ENCODE measurements at regions of chr4 and their contacts with region 1.

Region 1: DNA sequence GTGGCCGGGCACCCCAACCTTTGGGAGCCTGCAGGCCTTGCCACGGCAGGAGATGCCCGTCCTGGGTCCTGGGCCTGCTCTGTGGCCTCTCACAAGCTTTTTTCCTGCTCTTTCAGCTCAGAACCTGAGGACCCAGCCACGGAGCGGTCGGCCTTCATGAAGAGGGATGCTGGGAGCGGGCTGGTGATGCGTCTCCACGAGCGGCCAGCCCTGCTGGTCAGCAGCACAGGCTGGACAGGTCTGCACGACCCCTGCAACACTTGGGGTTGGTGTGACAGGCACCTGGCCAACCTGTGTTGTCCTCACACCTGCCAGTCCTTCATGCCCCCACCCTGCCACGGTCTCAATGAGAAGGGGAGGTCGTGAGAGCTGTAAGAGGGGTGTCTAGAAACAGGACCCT is 170.0 kb downstream of the ADRA2C start:
- DNase-seq: no peak
- H3K4me3 ChIP-seq: no peak overlapping the region
- H3K27ac ChIP-seq: no peak overlapping the region
- H3K4me1 ChIP-seq: no peaks in the 10 kb centered on the region
- H3K27me3 ChIP-seq: no peaks in the 10 kb centered on the region
- CTCF ChIP-seq: no peak
- POLR2A ChIP-seq: no peak

Region 2: GRCh38 chr4:2781921-2782320 is 1154.3 kb before region 1 on chr4:
- CTCF ChIA-PET with region 1: no interaction called
- POLR2A ChIA-PET with region 1: no interaction called
- dilution Hi-C with region 1: no loop called
- intact Hi-C with region 1: no loop called
- DNase-seq: no peak
- H3K4me3 ChIP-seq: no peak overlapping the region
- H3K27ac ChIP-seq: no peak overlapping the region
- H3K4me1 ChIP-seq: no peaks in the 10 kb centered on the region
- H3K27me3 ChIP-seq: peaks cover 10 to 14% of the 10 kb centered on the region in 2 experiments
- CTCF ChIP-seq: no peak
- POLR2A ChIP-seq: no peak

Region 3: GRCh38 chr4:3747581-3747904 is 188.6 kb before region 1 on chr4:
- CTCF ChIA-PET with region 1: interaction called, 12 read pairs
- POLR2A ChIA-PET with region 1: no interaction called
- dilution Hi-C with region 1: no loop called
- intact Hi-C with region 1: no loop called
- DNase-seq: no peak
- H3K4me3 ChIP-seq: no peak overlapping the region
- H3K27ac ChIP-seq: no peak overlapping the region
- H3K4me1 ChIP-seq: no peaks in the 10 kb centered on the region
- H3K27me3 ChIP-seq: peaks cover 5 to 12% of the 10 kb centered on the region in 2 experiments
- CTCF ChIP-seq: peak; percentile 23 to 55
- POLR2A ChIP-seq: no peak

Region 4: DNA sequence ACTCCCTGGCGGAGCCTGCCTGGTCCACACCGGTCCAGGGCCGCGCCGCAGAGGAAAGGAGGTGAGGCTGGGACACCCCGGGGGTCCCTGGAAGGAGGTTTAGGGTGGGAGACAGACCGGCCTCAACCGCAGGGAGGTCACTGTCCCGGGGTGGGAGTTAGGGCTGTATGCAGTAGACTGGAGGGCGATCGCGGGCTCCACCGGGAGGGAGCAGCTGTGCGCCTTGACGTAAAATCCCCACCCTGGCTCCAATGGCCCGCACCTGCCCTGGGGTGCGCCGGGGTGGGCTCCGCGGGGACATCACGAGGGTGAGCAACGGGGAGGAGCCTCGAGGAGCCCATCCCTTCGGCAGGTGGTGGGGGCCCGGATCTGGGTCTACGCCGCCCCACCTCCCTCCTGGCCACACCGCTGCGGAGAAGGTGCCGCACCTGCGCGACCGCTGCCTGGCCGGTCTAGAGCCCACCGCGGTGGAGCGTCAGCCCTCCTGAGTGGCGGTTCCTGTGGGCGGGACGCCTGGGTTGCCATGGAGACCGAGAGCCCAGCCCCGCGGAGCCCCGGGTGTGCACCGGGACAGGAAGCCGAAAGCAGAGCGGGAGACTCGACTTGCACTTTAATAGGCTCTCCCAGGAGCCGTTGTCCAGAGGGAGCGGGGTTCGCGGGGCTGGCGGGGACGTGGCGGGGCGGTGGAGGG is 64.9 kb before region 1 on chr4:
- CTCF ChIA-PET with region 1: no interaction called
- POLR2A ChIA-PET with region 1: no interaction called
- dilution Hi-C with region 1: no loop called
- intact Hi-C with region 1: no loop called
- DNase-seq: no peak
- H3K4me3 ChIP-seq: no peak overlapping the region
- H3K27ac ChIP-seq: no peak overlapping the region
- H3K4me1 ChIP-seq: no peaks in the 10 kb centered on the region
- H3K27me3 ChIP-seq: peaks cover 10 to 12% of the 10 kb centered on the region in 2 experiments
- CTCF ChIP-seq: no peak
- POLR2A ChIP-seq: no peak

Region 5: GRCh38 chr4:4430492-4431197 is 494.5 kb after region 1 on chr4:
- CTCF ChIA-PET with region 1: no interaction called
- POLR2A ChIA-PET with region 1: no interaction called
- dilution Hi-C with region 1: no loop called
- intact Hi-C with region 1: no loop called
- DNase-seq: peak; percentile 50
- H3K4me3 ChIP-seq: no peak overlapping the region
- H3K27ac ChIP-seq: no peak overlapping the region
- H3K4me1 ChIP-seq: peaks cover 4% of the 10 kb centered on the region
- H3K27me3 ChIP-seq: no peaks in the 10 kb centered on the region
- CTCF ChIP-seq: peak; percentile 73 to 74
- POLR2A ChIP-seq: no peak

Measured in endothelial cell of umbilical vein (primary cell).